ENCODE measurements at regions of chr11 and their contacts with region 1.

Region 1: DNA sequence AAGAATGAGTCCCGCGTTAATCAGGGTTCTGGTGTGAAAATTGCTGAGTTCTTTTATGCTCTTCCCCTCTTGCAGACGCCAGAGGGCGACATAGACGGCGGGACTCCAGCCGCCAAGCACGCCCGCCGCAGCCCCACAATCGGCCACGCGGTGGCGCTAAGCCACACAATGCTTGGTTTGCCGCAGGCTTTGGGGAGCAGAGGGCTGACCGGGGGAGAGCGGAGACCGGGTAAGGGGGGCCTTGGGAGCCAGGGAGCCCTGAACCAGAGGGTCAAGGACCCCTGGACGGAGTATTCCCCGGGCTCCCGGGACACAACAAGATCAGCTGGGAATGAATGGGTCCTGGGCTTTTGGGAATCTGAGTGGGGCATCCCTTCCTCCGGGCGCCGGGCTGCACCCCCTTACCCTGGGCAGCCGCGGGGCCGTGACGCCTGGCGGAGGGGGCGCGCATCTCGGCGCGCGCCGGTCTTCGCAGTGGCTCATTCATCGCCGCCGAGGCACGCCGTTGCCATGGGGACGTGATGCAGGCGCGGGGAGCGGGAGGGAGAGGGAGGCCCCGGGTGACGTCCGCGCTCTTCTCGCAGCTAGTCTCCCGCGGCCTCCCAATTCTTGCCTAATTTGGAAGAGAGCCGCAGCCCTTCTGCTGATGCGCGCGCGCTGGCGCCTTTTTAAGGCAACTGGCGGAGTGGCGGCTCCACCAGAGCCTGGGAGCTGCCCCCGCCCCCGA is 12.2 kb upstream of the NPAS4 start:
- DNase-seq: peak; percentile 97
- H3K4me3 ChIP-seq: peak overlapping the region; percentile 43
- H3K27ac ChIP-seq: peak overlapping the region; percentile 76
- H3K4me1 ChIP-seq: peaks cover 4% of the 10 kb centered on the region
- H3K27me3 ChIP-seq: peaks cover 26% of the 10 kb centered on the region
- CTCF ChIP-seq: peak; percentile 100

Region 2: GRCh38 chr11:65947146-65947545 is 461.5 kb before region 1 on chr11:
- CTCF ChIA-PET with region 1: no interaction called
- POLR2A ChIA-PET with region 1: no interaction called
- intact Hi-C with region 1: no loop called
- DNase-seq: no peak
- H3K4me3 ChIP-seq: no peak overlapping the region
- H3K27ac ChIP-seq: no peak overlapping the region
- H3K4me1 ChIP-seq: no peaks in the 10 kb centered on the region
- H3K27me3 ChIP-seq: no peaks in the 10 kb centered on the region
- CTCF ChIP-seq: no peak

Region 3: DNA sequence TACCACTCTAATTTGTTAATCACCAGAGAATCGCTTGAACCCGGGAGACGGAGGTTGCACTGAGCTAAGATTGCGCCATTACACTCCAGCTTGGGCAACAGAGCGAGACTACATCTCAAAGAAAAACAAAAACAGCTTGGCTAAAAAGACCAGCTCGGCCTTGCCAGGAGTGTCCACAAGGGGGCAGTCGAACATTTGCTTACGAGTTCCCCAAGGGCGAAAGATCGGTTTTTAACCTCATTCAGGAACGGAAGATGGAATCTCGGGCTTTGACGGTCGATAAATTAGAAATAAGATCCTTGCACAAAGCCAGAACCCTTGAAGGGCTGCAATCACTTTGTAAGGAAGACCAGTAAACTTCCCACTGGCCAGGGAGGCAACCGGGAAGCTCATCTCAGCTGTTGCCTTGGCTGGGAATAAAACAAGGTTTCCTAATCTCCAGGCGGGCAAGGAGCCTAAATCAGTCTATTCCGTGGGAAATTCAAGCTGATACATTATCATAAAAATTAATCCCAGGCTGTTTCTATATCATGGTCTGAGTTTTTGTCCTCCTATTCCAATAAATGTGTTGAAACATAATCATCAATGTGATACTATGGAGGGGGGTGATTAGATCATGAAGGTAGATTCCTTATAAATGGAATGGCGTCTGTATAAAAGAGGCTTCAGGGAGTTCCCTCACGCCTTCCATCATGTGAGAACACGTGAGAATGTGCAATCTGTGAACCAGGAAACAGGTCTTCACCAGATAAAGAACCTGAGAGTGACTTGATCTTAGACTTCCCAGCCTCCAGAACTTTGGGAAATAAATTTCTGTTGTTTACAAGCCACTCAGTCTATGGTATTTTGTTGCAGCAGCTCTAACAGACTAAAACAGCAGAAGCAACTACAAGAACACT is 22.2 kb before region 1 on chr11:
- CTCF ChIA-PET with region 1: interaction called, 14 read pairs
- POLR2A ChIA-PET with region 1: no interaction called
- intact Hi-C with region 1: no loop called
- DNase-seq: peak; percentile 93
- H3K4me3 ChIP-seq: peak overlapping the region; percentile 26
- H3K27ac ChIP-seq: no peak overlapping the region
- H3K4me1 ChIP-seq: peaks cover 2% of the 10 kb centered on the region
- H3K27me3 ChIP-seq: no peaks in the 10 kb centered on the region
- CTCF ChIP-seq: peak; percentile 99

Region 4: GRCh38 chr11:66429983-66430602 is 21.4 kb after region 1 on chr11:
- CTCF ChIA-PET with region 1: interaction called, 4 read pairs
- POLR2A ChIA-PET with region 1: no interaction called
- intact Hi-C with region 1: loop called (anchors 1 kb)
- DNase-seq: peak; percentile 84
- H3K4me3 ChIP-seq: no peak overlapping the region
- H3K27ac ChIP-seq: no peak overlapping the region
- H3K4me1 ChIP-seq: no peaks in the 10 kb centered on the region
- H3K27me3 ChIP-seq: no peaks in the 10 kb centered on the region
- CTCF ChIP-seq: peak; percentile 96

Region 5: GRCh38 chr11:66479394-66480116 is 70.9 kb after region 1 on chr11:
- CTCF ChIA-PET with region 1: interaction called, 6 read pairs
- POLR2A ChIA-PET with region 1: no interaction called
- intact Hi-C with region 1: loop called (anchors 1 kb)
- DNase-seq: no peak
- H3K4me3 ChIP-seq: peak overlapping the region; percentile 87
- H3K27ac ChIP-seq: peak overlapping the region; percentile 91
- H3K4me1 ChIP-seq: no peaks in the 10 kb centered on the region
- H3K27me3 ChIP-seq: no peaks in the 10 kb centered on the region
- CTCF ChIP-seq: no peak

Region 6: DNA sequence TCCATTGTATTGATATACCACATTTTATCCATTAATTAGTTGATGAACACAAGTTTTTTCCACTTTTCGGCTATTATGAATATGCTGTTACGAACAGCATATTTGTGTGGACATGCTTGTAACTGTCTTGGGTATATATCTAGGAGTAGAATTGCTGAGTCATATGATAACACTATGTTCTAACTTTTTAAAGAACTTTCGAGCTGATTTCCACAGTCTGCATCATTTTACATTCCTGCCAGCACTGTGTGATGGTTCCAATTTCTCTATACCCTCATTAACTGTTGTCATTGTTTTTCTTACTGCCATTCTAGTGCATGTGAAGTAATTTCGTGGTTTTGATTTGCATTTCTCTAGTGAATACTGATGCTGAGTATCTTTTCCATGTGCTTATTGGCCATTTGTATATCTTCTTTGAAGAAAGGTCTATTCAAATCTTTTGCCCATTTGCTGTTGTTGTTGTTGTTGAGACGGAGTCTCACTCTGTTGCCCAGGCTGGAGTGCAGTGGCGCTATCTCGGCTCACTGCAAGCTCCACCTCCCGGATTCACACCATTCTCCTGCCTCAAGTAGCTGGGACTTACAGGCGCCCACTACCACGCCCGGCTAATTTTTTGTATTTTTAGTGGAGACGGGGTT is 427.2 kb after region 1 on chr11:
- CTCF ChIA-PET with region 1: no interaction called
- POLR2A ChIA-PET with region 1: no interaction called
- intact Hi-C with region 1: loop called (anchors 5 kb)
- DNase-seq: no peak
- H3K4me3 ChIP-seq: no peak overlapping the region
- H3K27ac ChIP-seq: no peak overlapping the region
- H3K4me1 ChIP-seq: no peaks in the 10 kb centered on the region
- H3K27me3 ChIP-seq: no peaks in the 10 kb centered on the region
- CTCF ChIP-seq: no peak